ENCODE measurements at regions of chr17 and their contacts with region 1.

Region 1: GRCh38 chr17:39687811-39688518 is at the start of gene PGAP3:
- DNase-seq: peak; percentile 71 to 90 (median 84)
- H3K4me3 ChIP-seq: peak within 1 kb of the TSS; percentile 57 to 96 (median 79)
- H3K27ac ChIP-seq: peak within 1 kb of the TSS; percentile 68 to 99 (median 95)
- H3K27me3 ChIP-seq: peaks cover 0 to 3% (median 0%) of the 10 kb centered on the region in 45 donors
- CTCF ChIP-seq: peak in 46 of 56 donors; percentile 1 to 62 (median 39)
- total RNA-seq, gene PGAP3: 14.2 to 41.1 (median 27.6) TPM

Region 2: DNA sequence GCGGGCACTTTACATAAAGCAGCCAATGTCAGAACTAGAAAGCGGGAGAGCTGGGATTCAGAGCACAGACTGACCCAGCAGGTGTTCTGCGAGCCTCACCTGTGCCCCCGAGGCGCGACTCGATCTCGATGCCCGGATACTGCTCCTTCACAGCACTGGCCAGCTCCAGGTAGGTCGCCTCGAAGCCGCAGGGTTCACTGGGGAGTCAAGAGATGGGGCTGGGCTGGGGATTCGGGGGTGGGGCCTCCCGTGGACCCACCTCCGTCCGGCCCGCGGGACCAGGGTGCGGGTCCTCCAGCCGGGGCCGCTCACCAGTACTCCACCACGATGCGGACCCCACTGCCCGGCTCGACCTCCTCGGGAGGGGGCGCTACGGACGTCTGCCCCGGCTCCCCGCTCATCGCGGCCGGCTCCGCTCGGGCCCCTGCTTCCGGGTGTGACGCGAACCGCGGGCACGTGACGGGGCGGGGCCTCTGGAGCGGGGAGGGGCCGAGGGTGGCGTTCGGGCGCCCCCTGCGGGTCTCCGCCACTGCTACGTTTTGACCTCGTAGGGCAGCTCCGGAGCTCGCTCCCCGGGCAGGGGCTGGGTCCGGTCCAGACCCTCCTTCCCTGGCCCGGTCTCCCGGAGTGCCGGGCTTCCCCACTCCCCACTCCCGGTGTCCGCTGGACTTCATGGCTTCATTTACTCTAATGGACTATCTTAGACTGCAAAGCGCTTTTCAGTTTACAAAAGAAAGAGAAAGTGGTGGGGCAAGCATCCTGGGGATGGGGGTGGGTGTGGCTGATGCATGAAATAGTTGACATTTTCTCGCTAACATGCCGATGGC is 42.3 kb after region 1 on chr17 and contains the start of gene MIEN1:
- intact Hi-C with region 1: loop called (anchors 2 kb)
- DNase-seq: peak; percentile 88 to 97 (median 92)
- H3K4me3 ChIP-seq: peak within 1 kb of the TSS; percentile 70 to 100 (median 92)
- H3K27ac ChIP-seq: peak within 1 kb of the TSS in 57 of 59 donors; percentile 44 to 95 (median 84)
- H3K27me3 ChIP-seq: no peaks in the 10 kb centered on the region
- CTCF ChIP-seq: peak; percentile 73 to 98 (median 93)
- total RNA-seq, gene MIEN1: 37.4 to 67.6 (median 52.1) TPM

Region 3: GRCh38 chr17:39782485-39782884 is 94.5 kb after region 1 on chr17:
- intact Hi-C with region 1: no loop called
- DNase-seq: no peak
- H3K4me3 ChIP-seq: no peak overlapping the region
- H3K27ac ChIP-seq: no peak overlapping the region
- H3K27me3 ChIP-seq: peaks cover 0 to 23% (median 0%) of the 10 kb centered on the region in 45 donors
- CTCF ChIP-seq: no peak

Region 4: DNA sequence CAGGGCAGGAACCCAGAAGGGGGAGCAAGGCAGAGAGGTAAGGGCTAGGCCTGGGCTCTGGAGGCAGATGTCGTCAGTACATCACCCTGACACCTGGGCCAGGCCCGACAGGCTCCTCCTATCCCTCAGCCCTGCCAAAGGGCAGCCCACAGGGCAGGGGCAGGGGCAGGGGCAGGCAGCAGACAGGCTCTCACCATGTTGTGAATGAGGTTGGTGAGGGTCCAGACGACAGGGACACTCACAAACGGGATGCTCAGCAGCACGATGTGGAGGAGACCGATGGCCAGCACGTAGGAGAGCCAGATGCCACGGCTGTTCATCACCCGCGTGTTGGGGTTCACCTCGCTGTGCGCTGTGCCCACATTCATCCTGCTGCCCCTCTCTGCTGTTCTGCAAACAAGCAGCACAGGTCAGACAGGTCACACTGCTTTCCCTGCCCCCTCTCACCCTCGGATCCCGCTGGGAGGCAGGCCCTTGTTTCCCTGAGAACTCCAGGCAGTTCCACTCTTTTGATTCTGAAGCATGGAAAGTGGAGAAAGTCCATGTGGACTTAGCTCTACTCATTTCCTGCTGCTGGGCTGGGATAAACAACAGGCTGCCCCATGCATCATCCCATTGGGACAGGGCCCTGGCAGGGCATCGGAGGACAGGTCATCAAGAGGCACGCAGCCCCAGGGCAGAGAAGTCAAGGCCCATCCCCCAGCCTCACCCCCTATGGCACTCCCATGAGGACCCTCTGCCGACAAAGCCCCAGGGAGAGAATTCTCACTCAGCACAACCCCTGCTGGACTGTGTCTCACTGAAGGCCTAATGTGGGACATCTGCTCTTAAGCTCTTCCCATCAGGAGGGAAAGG is 236.1 kb after region 1 on chr17:
- intact Hi-C with region 1: no loop called
- DNase-seq: no peak
- H3K4me3 ChIP-seq: no peak overlapping the region
- H3K27ac ChIP-seq: no peak overlapping the region
- H3K27me3 ChIP-seq: no peaks in the 10 kb centered on the region
- CTCF ChIP-seq: no peak